ENCODE measurements at regions of chr21 and their contacts with region 1.

Region 1: GRCh38 chr21:32214654-32215305 is 64.1 kb downstream of the MIS18A start:
- DNase-seq: no peak
- H3K4me3 ChIP-seq: no peak overlapping the region
- H3K27ac ChIP-seq: no peak overlapping the region
- H3K27me3 ChIP-seq: no peaks in the 10 kb centered on the region
- CTCF ChIP-seq: no peak

Region 2: GRCh38 chr21:32021319-32021994 is 193.3 kb before region 1 on chr21:
- intact Hi-C with region 1: no loop called
- DNase-seq: peak; percentile 35 to 77 (median 58)
- H3K4me3 ChIP-seq: no peak overlapping the region
- H3K27ac ChIP-seq: no peak overlapping the region
- H3K27me3 ChIP-seq: no peaks in the 10 kb centered on the region
- CTCF ChIP-seq: no peak

Region 3: DNA sequence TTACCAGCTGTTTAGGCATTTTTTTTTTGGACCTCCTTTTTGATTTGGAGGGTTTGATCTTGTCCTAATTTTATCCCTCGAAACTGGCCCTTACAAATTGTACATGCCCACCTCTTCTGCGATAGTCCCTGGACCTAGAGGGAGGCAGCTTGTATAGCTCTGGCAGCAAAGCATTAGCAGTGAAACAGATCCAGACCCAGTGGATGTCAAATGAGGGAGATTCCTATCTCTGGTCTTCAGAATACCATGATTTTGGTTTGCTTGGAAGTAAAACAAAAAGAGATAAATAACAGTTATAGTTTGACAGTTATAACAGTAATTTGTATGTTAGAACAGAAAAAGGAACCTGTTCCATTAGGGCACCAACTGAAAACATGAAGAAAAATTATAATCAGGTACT is 59.6 kb before region 1 on chr21:
- intact Hi-C with region 1: loop called in 1 of 2 experiments (anchors 10 kb)
- DNase-seq: no peak
- H3K4me3 ChIP-seq: no peak overlapping the region
- H3K27ac ChIP-seq: no peak overlapping the region
- H3K27me3 ChIP-seq: no peaks in the 10 kb centered on the region
- CTCF ChIP-seq: no peak

Region 4: DNA sequence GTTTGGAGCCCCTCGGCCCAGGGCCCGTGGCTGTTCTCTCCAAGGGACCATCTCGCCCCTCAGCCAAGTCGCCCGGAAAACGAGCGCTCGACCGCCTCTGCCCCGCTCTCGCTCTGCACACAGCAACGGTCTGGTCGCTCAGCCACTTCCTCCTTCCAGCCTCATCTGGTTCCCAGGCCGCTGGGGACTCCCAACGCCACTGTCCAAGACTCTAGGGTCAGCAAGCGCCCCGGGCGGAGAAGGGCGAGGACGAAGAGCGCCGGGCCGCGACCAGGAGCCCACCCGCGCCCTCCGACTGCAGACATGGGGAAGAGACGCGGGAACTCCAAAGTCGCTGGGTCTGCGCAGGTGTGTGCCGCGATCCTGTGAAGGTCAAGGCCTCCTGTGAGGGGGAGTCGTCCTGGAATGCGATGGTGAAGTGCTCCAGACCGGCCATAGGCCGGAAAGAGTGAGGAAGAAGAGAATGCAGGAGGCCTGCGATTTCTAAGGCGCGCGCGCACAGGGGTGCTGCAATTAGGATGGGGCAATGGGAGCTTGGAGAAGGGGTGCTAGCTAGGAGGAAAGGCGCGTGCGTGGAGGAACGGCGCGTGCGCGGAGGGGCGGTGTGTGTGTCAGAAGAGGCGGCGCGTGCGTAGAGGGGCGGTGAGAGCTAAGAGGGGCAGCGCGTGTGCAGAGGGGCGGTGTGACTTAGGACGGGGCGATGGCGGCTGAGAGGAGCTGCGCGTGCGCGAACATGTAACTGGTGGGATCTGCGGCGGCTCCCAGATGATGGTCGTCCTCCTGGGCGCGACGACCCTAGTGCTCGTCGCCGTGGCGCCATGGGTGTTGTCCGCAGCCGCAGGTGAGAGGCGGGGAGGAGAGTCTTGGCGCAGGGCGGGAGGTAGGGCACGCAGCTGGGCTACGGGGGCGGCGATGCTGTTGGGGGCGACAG is 1109.8 kb after region 1 on chr21 and contains the start of gene IFNAR1:
- intact Hi-C with region 1: no loop called
- DNase-seq: peak; percentile 93 to 97 (median 94)
- H3K4me3 ChIP-seq: peak within 1 kb of the TSS; percentile 67 to 100 (median 94)
- H3K27ac ChIP-seq: peak within 1 kb of the TSS; percentile 87 to 100 (median 98)
- H3K27me3 ChIP-seq: no peaks in the 10 kb centered on the region
- CTCF ChIP-seq: peak in 14 of 56 donors; percentile 0 to 27 (median 14)
- total RNA-seq, gene IFNAR1: 35.7 to 70.9 (median 47.8) TPM

Measured in dorsolateral prefrontal cortex (tissue), 120 donors.